A673 (cell line): ENCODE measurements at regions of chr10 and their contacts with region 1.

Region 1: DNA sequence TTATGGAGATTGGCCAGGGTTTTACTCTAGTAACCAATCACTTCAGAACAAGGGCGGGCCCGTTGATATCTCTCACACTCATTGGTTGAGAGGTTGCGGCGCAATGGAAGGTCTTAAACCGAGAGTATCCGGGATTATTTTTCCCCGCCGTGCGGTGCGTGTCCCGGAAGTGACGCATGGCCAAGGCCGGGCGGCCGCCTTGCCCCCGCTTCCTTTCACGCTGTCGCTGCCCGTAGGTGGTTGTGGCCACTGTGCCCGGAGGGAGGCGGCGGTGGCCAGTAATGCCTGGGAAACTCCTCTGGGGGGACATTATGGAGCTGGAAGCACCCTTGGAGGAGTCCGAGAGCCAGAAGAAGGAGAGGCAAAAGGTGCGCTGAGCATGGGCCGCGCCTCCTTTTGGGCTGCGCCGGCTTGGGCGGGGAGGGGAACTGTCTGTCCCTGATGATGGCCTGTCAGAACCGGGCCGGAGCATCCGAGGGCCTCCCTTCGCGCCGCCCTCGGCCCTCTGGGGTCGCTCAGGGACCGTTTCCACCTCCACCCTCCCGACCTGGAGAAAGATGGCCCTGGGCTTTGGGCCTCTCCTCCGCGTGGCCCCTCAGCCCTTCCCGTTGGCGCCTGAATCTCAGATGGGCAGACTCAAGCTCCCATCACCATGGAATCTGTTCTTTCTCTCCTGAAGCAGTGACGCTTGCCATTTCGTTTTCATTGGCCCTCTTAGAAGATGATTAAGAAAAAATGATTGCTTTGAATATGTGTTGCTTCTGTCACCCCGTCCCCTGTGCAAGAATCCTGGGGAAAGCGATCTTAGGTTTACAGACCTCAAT is at the start of gene DDX50:
- DNase-seq: peak; percentile 100
- H3K4me3 ChIP-seq: peak within 1 kb of the TSS; percentile 85
- H3K27ac ChIP-seq: peak within 1 kb of the TSS; percentile 98
- H3K4me1 ChIP-seq: peaks cover 17% of the 10 kb centered on the region
- H3K27me3 ChIP-seq: no peaks in the 10 kb centered on the region
- CTCF ChIP-seq: no peak
- total RNA-seq, gene DDX50: 46.1 and 50.1 TPM in 2 replicates

Region 2: GRCh38 chr10:68550747-68551411 is 350.4 kb before region 1 on chr10:
- CTCF ChIA-PET with region 1: no interaction called
- POLR2A ChIA-PET with region 1: no interaction called
- intact Hi-C with region 1: loop called (anchors 10 kb)
- DNase-seq: peak; percentile 92
- H3K4me3 ChIP-seq: no peak overlapping the region
- H3K27ac ChIP-seq: no peak overlapping the region
- H3K4me1 ChIP-seq: peaks cover 3% of the 10 kb centered on the region
- H3K27me3 ChIP-seq: no peaks in the 10 kb centered on the region
- CTCF ChIP-seq: peak; percentile 86

Region 3: GRCh38 chr10:68792115-68792514 is 109.2 kb before region 1 on chr10:
- CTCF ChIA-PET with region 1: no interaction called
- POLR2A ChIA-PET with region 1: no interaction called
- intact Hi-C with region 1: loop called (anchors 1 kb)
- DNase-seq: no peak
- H3K4me3 ChIP-seq: no peak overlapping the region
- H3K27ac ChIP-seq: no peak overlapping the region
- H3K4me1 ChIP-seq: no peaks in the 10 kb centered on the region
- H3K27me3 ChIP-seq: no peaks in the 10 kb centered on the region
- CTCF ChIP-seq: peak; percentile 51; the same call in 1 of the 2 replicates

Region 4: DNA sequence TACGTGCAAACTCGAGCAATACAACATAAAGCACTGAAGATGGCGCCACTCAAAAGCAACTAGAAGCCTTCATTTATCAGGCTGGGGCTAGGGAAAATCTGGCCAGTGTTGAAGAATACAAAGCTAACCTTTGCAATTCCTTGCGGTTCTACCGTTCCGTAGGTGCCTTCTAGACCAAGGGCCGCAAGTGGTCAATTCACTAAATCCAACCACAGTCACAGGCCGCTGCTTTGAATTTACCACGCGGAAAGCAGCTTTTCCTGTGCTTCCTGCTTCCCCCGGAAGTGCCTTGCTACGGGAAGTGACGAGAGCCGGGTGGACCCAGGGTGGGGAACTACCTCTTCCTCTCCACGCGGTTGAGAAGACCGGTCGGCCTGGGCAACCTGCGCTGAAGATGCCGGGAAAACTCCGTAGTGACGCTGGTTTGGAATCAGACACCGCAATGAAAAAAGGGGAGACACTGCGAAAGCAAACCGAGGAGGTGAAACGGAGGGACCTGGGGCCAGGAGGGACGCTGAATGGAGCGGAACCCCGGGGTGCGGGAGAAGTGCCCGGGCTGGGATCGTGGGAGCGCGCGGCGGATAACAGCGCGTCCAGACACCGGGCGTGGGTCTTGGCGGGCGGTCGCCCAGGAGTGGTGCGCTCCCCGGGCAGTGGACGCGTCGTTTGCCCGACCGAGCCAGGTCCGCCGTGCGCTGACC is 54.7 kb after region 1 on chr10 and contains the start of gene DDX21:
- CTCF ChIA-PET with region 1: no interaction called
- POLR2A ChIA-PET with region 1: no interaction called
- intact Hi-C with region 1: loop called (anchors 5 kb)
- DNase-seq: peak; percentile 97
- H3K4me3 ChIP-seq: peak within 1 kb of the TSS; percentile 74
- H3K27ac ChIP-seq: peak within 1 kb of the TSS; percentile 86
- H3K4me1 ChIP-seq: no peaks in the 10 kb centered on the region
- H3K27me3 ChIP-seq: no peaks in the 10 kb centered on the region
- CTCF ChIP-seq: peak; percentile 79
- total RNA-seq, gene DDX21: 154 and 188 TPM in 2 replicates